ENCODE measurements at regions of chr14 and their contacts with region 1.

Region 1: GRCh38 chr14:29710015-29710565 is 217.6 kb downstream of the PRKD1 start:
- H3K4me3 ChIP-seq: no peak overlapping the region
- H3K27ac ChIP-seq: no peak overlapping the region
- H3K4me1 ChIP-seq: no peaks in the 10 kb centered on the region
- CTCF ChIP-seq: no peak

Region 2: GRCh38 chr14:29607169-29607568 is 102.9 kb before region 1 on chr14:
- CTCF ChIA-PET with region 1: no interaction called
- POLR2A ChIA-PET with region 1: interaction called, 10 read pairs
- H3K4me3 ChIP-seq: no peak overlapping the region
- H3K27ac ChIP-seq: no peak overlapping the region
- H3K4me1 ChIP-seq: no peaks in the 10 kb centered on the region
- CTCF ChIP-seq: no peak

Region 3: DNA sequence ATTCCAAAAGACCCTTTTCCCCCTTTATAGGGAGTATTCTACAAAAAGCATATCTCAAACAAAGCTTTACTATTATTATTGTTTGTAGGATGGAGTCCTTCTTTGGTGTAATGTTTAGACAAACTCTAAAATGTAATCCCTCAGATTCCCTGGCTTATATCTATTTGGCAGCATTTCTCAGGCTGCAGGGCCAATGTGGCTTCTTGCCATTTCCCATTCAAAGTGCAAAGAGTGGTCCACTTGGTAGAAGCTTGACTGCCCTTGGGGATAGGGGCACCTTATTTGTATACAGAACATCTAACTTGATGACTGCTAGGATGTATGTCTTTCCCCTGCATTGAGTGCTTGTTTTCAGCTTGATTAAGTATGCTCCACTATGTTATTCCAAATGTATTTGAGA is 25.2 kb before region 1 on chr14:
- CTCF ChIA-PET with region 1: no interaction called
- POLR2A ChIA-PET with region 1: no interaction called
- H3K4me3 ChIP-seq: no peak overlapping the region
- H3K27ac ChIP-seq: no peak overlapping the region
- H3K4me1 ChIP-seq: no peaks in the 10 kb centered on the region
- CTCF ChIP-seq: no peak

Region 4: DNA sequence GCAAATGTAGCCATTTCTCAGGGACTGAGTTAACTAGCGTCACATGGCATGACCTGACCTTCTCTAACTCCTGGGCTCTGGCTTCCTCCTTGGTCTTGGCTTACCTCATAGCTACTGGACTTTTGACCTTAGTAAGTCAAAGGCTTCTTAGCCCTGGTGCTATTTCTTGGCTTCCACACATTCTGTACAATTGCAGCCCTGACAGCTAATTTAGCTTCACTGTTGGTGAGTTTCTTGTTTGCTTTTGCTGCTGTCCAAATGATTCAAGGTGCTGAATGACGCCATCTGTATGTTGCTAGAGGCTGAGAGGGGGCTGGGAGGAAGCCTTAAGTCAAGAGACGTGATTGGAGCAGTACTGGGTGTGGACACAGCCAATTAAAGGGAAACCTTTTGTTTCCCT is 14.9 kb after region 1 on chr14:
- CTCF ChIA-PET with region 1: no interaction called
- POLR2A ChIA-PET with region 1: no interaction called
- H3K4me3 ChIP-seq: no peak overlapping the region
- H3K27ac ChIP-seq: no peak overlapping the region
- H3K4me1 ChIP-seq: peaks cover 13% of the 10 kb centered on the region
- CTCF ChIP-seq: no peak

Region 5: GRCh38 chr14:29749327-29749726 is 39.2 kb after region 1 on chr14:
- CTCF ChIA-PET with region 1: no interaction called
- POLR2A ChIA-PET with region 1: no interaction called
- H3K4me3 ChIP-seq: no peak overlapping the region
- H3K27ac ChIP-seq: no peak overlapping the region; the same call in 1 of the 2 replicates
- H3K4me1 ChIP-seq: peaks cover 19% of the 10 kb centered on the region
- CTCF ChIP-seq: no peak

Region 6: GRCh38 chr14:30015489-30015888 is 305.4 kb after region 1 on chr14:
- CTCF ChIA-PET with region 1: no interaction called
- POLR2A ChIA-PET with region 1: no interaction called
- H3K4me3 ChIP-seq: no peak overlapping the region
- H3K27ac ChIP-seq: no peak overlapping the region
- H3K4me1 ChIP-seq: no peaks in the 10 kb centered on the region
- CTCF ChIP-seq: no peak

Measured in HEK293 (cell line).